ENCODE measurements at regions of chr2 and their contacts with region 1.

Region 1: DNA sequence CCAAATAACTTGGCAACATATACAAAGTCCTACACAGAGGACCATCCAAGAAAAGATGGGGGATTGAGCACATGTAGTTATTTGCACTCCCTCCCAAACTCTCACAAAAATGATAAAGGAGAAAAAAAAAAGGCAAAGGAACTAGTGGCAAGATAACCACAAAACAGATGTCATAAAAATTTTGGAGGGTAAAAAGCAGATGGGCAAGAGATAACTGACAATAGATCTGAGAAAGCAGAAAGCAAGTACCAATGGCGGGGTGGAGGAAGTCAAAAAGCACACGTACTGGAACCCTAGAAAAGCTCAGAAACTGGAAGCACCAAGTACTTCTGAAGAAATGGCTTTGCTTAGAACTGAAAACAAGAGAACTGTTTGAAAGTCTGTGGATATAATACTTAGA is 82.0 kb downstream of the WDPCP start:
- DNase-seq: no peak
- ATAC-seq: no peak
- H3K4me3 ChIP-seq: no peak overlapping the region
- H3K4me3 Mint-ChIP-seq: no peak overlapping the region
- H3K27ac ChIP-seq: no peak overlapping the region
- H3K27ac Mint-ChIP-seq: no peak overlapping the region
- H3K4me1 ChIP-seq: no peaks in the 10 kb centered on the region
- H3K4me1 Mint-ChIP-seq: peaks cover 28% of the 10 kb centered on the region
- H3K27me3 ChIP-seq: no peaks in the 10 kb centered on the region
- H3K27me3 Mint-ChIP-seq: no peaks in the 10 kb centered on the region
- CTCF ChIP-seq: no peak

Region 2: GRCh38 chr2:63093512-63093911 is 412.8 kb before region 1 on chr2:
- CTCF ChIA-PET with region 1: no interaction called
- POLR2A ChIA-PET with region 1: no interaction called
- intact Hi-C with region 1: no loop called
- DNase-seq: no peak
- ATAC-seq: no peak
- H3K4me3 ChIP-seq: no peak overlapping the region
- H3K4me3 Mint-ChIP-seq: no peak overlapping the region
- H3K27ac ChIP-seq: no peak overlapping the region
- H3K27ac Mint-ChIP-seq: no peak overlapping the region
- H3K4me1 ChIP-seq: no peaks in the 10 kb centered on the region
- H3K4me1 Mint-ChIP-seq: no peaks in the 10 kb centered on the region
- H3K27me3 ChIP-seq: no peaks in the 10 kb centered on the region
- H3K27me3 Mint-ChIP-seq: peaks cover 21% of the 10 kb centered on the region
- CTCF ChIP-seq: no peak

Region 3: DNA sequence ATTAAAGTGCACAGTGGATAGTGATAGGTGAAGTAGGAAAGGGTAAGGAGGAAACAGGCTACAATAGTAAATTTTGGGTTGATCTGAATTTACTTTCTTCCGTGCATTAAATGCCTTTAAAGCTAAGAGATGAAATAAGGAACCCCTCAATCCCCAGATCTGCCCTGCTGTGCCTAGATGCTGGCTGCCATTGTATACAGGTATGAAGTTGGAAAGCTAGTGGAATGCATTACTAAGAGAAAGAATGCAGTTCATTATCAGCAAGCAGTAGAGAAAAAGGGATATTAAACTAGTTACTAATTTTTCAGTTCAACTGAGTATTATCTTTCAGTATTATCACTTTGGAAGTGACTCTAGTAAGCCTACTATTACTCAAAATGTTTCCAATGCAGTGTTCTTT is 11.4 kb before region 1 on chr2:
- CTCF ChIA-PET with region 1: no interaction called
- POLR2A ChIA-PET with region 1: no interaction called
- intact Hi-C with region 1: loop called in 1 of 2 experiments (anchors 1 kb)
- DNase-seq: no peak
- ATAC-seq: no peak
- H3K4me3 ChIP-seq: no peak overlapping the region
- H3K4me3 Mint-ChIP-seq: no peak overlapping the region
- H3K27ac ChIP-seq: no peak overlapping the region
- H3K27ac Mint-ChIP-seq: no peak overlapping the region
- H3K4me1 ChIP-seq: no peaks in the 10 kb centered on the region
- H3K4me1 Mint-ChIP-seq: no peaks in the 10 kb centered on the region
- H3K27me3 ChIP-seq: no peaks in the 10 kb centered on the region
- H3K27me3 Mint-ChIP-seq: no peaks in the 10 kb centered on the region
- CTCF ChIP-seq: no peak